ENCODE measurements at regions of chr3 and their contacts with region 1.

Region 1: DNA sequence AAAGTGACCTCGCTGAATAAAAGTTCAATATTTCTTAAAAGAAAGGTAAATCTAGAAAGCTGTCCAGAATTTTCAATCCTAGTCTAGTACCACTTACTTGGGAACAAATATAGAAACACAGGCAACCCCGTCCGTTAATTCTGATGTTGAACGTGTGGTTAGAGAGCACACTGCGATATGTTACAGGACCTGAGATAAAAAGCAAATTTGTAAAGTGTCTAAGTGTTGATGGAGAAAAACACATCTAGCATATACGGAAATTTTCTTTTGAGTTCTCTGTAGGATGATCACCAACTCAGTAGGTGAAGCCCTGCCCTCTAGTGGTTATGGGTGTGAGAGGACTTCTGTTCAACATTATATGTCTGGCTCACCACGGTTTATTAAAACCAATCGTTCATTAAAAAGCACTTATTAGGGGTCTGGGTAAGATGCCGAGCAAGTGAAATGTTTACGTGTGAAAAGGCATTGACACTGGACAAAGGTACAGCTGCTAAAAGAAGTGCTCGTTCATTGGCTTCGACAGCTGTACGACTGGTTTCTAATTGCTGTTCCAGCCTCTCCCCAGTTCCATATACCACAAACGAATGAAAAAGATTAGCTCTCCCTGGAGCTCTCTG is 1.0 kb upstream of the ATP2C1 start:
- DNase-seq: peak; percentile 71
- H3K4me3 ChIP-seq: peak overlapping the region; percentile 45 to 98 (median 80)
- H3K27ac ChIP-seq: peak overlapping the region; percentile 96
- H3K4me1 ChIP-seq: peaks cover 7 to 14% of the 10 kb centered on the region in 2 donors
- H3K27me3 ChIP-seq: no peaks in the 10 kb centered on the region
- CTCF ChIP-seq: peak; percentile 51 to 89 (median 82)
- POLR2A ChIP-seq: no peak

Region 2: GRCh38 chr3:130260918-130261317 is 631.9 kb before region 1 on chr3:
- intact Hi-C with region 1: no loop called
- DNase-seq: no peak
- H3K4me3 ChIP-seq: no peak overlapping the region
- H3K27ac ChIP-seq: no peak overlapping the region
- H3K4me1 ChIP-seq: no peaks in the 10 kb centered on the region
- H3K27me3 ChIP-seq: no peaks in the 10 kb centered on the region
- CTCF ChIP-seq: no peak
- POLR2A ChIP-seq: no peak

Region 3: DNA sequence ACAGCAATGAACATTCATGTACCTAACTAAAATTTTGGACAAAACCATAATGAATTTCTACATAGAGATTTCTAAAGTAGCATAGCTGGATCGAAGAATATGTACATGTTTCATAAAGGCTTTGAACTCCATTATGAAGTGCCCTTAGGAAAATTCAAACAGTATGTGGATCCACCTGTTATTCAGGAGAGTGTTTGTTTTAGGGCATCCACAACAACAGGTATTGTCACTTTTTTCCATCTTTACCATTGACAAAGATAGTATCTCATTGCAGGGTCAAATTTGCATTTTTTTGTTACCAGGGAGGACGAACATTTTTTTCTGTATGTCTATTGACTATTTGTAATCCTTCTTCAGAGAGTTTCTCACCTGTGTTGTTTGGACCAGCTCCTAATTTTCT is 472.4 kb before region 1 on chr3:
- intact Hi-C with region 1: no loop called
- DNase-seq: no peak
- H3K4me3 ChIP-seq: no peak overlapping the region
- H3K27ac ChIP-seq: no peak overlapping the region
- H3K4me1 ChIP-seq: no peaks in the 10 kb centered on the region
- H3K27me3 ChIP-seq: no peaks in the 10 kb centered on the region
- CTCF ChIP-seq: no peak
- POLR2A ChIP-seq: no peak

Region 4: GRCh38 chr3:130737622-130738021 is 155.2 kb before region 1 on chr3:
- intact Hi-C with region 1: no loop called
- DNase-seq: no peak
- H3K4me3 ChIP-seq: no peak overlapping the region
- H3K27ac ChIP-seq: no peak overlapping the region
- H3K4me1 ChIP-seq: peaks cover 20% of the 10 kb centered on the region in 2 donors
- H3K27me3 ChIP-seq: no peaks in the 10 kb centered on the region
- CTCF ChIP-seq: no peak
- POLR2A ChIP-seq: no peak

Region 5: DNA sequence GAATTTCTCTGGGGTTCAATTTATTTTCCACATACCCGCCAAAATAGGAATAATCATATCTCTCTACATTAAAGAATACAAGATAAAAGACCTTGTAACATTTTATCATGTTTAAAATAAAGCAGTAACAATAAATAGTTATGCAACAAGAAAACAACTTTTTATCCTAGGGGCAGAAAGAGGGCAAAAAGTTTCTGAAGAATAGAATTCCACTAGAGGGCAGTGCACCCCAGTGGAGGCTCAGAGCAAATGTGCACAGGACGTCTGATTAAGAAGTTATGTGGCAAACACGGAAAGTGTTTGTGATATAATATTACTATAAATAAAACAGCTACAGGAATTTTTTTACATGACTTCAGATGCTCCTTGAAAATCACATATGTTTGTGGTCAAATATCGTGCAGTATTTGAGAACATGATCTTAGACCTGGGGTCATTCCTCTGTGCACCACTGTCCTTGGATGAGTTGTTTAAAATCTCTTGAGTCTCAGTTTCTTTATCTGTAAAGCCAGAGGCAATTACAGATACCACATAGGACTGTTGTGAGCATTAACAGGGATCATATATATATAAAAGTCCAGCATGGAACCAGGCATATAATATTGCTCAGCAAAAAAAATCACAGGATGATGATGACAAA is 133.0 kb before region 1 on chr3:
- intact Hi-C with region 1: loop called (anchors 10 kb)
- DNase-seq: peak in 1 of 2 donors; percentile 52
- H3K4me3 ChIP-seq: no peak overlapping the region
- H3K27ac ChIP-seq: no peak overlapping the region
- H3K4me1 ChIP-seq: peaks cover 0 to 2% of the 10 kb centered on the region in 2 donors
- H3K27me3 ChIP-seq: no peaks in the 10 kb centered on the region
- CTCF ChIP-seq: peak; percentile 26 to 78 (median 61)
- POLR2A ChIP-seq: no peak